Mammary epithelial cell (primary cell): ENCODE measurements at regions of chr14 and their contacts with region 1.

Region 1: GRCh38 chr14:51989293-51990234 is at the start of gene RTRAF:
- DNase-seq: peak; percentile 91
- H3K4me3 ChIP-seq: peak within 1 kb of the TSS; percentile 58 to 98 (median 69)
- H3K27ac ChIP-seq: peak within 1 kb of the TSS; percentile 69
- H3K4me1 ChIP-seq: peaks cover 6% of the 10 kb centered on the region
- H3K27me3 ChIP-seq: no peaks in the 10 kb centered on the region
- CTCF ChIP-seq: no peak
- total RNA-seq, gene RTRAF: 52.7 to 176 TPM

Region 2: GRCh38 chr14:51704545-51704944 is 285.0 kb before region 1 on chr14:
- CTCF ChIA-PET with region 1: no interaction called
- dilution Hi-C with region 1: no loop called
- in situ Hi-C with region 1: no loop called
- intact Hi-C with region 1: no loop called
- DNase-seq: no peak
- H3K4me3 ChIP-seq: no peak overlapping the region
- H3K27ac ChIP-seq: no peak overlapping the region
- H3K4me1 ChIP-seq: no peaks in the 10 kb centered on the region
- H3K27me3 ChIP-seq: no peaks in the 10 kb centered on the region
- CTCF ChIP-seq: no peak

Region 3: DNA sequence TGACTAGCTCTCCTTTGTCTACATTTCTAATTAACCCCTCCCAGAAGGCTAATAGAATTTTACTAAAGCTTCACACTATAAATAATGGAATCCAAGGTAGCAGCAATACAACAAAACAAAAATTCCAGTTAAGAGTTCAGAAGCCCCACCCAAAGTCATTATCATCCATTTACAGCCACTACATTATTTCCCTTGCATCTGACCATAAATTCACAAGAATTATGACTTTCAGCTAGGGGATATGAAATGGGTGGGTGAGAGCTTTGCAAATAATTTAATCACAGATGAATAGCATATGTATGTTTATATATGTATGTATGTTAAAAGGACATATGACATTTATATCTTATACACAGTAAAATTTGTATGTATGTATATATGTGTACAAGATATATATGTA is 212.6 kb after region 1 on chr14:
- CTCF ChIA-PET with region 1: no interaction called
- dilution Hi-C with region 1: no loop called
- in situ Hi-C with region 1: no loop called
- intact Hi-C with region 1: no loop called
- DNase-seq: no peak
- H3K4me3 ChIP-seq: no peak overlapping the region
- H3K27ac ChIP-seq: no peak overlapping the region
- H3K4me1 ChIP-seq: no peaks in the 10 kb centered on the region
- H3K27me3 ChIP-seq: peaks cover 8% of the 10 kb centered on the region
- CTCF ChIP-seq: no peak

Region 4: DNA sequence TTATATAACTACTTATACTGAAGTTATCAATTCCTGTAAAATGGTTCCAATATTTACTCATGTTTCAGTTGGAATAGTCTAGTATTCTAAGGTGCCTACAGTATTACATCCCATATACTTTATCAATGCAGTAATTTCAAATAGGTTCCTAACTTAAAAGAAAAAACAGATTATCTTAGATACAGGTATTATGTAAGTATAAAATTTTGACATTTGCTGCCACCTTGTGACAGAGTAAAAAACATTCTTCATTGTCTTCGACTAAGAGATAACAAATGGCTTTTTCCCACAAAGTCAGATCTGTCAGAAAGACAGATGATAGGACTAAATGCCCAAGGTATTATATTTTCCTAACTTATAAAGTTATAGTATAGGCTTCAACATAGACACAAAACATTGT is 484.0 kb after region 1 on chr14:
- CTCF ChIA-PET with region 1: no interaction called
- dilution Hi-C with region 1: no loop called
- in situ Hi-C with region 1: no loop called
- intact Hi-C with region 1: loop called (anchors 10 kb)
- DNase-seq: peak; percentile 31
- H3K4me3 ChIP-seq: no peak overlapping the region
- H3K27ac ChIP-seq: no peak overlapping the region
- H3K4me1 ChIP-seq: no peaks in the 10 kb centered on the region
- H3K27me3 ChIP-seq: no peaks in the 10 kb centered on the region
- CTCF ChIP-seq: peak; percentile 16 to 42